ENCODE measurements at regions of chr19 and their contacts with region 1.

Region 1: DNA sequence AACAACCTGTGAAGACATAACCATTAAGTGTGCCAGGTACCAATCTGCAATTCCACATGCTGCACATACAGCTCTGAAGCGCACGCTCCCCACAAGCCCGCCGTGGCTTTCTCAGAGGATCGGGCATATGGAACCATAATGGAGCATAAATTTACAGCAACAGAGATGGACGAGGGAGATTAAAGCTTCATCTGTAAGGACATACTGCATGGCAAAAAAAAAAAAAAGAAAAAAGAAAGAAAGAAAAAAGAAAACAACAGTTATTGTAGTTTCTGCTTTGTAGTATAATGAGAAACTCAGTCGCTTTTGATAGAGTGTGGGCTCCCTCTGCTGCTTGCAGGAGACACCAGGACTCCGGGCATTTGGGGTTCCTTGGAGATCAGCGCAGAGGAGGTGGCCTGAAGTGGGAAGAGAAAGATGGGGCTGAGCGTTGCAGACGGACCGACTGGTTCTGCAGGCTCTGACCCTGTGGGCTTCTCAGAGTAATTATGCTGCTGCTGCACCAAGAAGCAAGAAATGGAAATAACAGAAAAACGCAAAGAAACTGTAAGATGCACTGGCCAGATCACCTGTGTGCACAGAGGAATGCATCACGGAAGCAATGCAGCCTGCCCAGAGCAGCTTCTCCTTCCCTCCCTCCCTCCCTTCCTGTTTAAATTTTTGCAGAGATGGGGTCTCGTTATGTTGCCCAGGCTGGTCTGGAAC is 10.8 kb upstream of the PDCD5 start:
- DNase-seq: peak in 1 of 2 donors; percentile 32
- ATAC-seq: no peak
- H3K4me3 ChIP-seq: no peak overlapping the region
- H3K27ac ChIP-seq: no peak overlapping the region
- H3K4me1 ChIP-seq: no peaks in the 10 kb centered on the region
- H3K27me3 ChIP-seq: peaks cover 0 to 1% of the 10 kb centered on the region in 2 donors

Region 2: GRCh38 chr19:31350701-31351068 is 1219.5 kb before region 1 on chr19:
- intact Hi-C with region 1: loop called in 1 of 2 experiments (anchors 10 kb)
- DNase-seq: peak; percentile 74 to 89
- ATAC-seq: peak; percentile 53
- H3K4me3 ChIP-seq: peak overlapping the region; percentile 98 to 99
- H3K27ac ChIP-seq: no peak overlapping the region
- H3K4me1 ChIP-seq: no peaks in the 10 kb centered on the region
- H3K27me3 ChIP-seq: no peaks in the 10 kb centered on the region

Region 3: DNA sequence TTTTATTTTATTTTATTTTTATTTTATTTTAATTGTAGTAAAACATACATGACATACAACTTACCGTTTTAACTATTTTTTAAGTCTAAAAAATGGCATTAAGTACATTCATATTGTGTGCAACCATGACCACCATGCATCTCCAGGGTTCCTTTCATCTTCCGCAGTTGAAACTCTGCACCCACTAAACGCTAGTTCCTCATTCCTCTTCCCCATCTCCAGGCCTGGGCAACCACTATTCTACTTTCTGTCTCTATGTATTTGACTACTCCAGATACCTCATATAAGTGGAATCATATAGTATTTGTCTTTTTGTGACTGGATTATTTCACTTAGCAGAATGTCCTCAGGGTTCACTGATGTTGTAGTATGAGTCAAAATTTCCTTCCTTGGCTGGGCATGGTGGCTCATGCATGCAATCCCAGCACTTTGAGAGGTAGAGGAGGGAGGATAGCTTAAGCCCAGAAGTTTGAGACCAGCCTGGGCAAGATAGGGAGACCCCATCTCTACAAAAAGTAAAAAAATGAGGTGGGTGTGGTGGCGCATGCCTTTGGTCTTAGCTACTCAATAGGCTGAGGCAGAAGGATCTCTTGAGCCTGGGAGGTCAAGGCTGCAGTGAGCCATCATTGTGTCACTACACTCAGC is 280.5 kb before region 1 on chr19:
- intact Hi-C with region 1: loop called in 1 of 2 experiments (anchors 10 kb)
- DNase-seq: no peak
- ATAC-seq: no peak
- H3K4me3 ChIP-seq: no peak overlapping the region
- H3K27ac ChIP-seq: no peak overlapping the region
- H3K4me1 ChIP-seq: no peaks in the 10 kb centered on the region
- H3K27me3 ChIP-seq: no peaks in the 10 kb centered on the region

Region 4: GRCh38 chr19:32674959-32675719 is 104.9 kb after region 1 on chr19 and contains the start of gene ANKRD27:
- intact Hi-C with region 1: no loop called
- DNase-seq: peak; percentile 99
- ATAC-seq: peak; percentile 99
- H3K4me3 ChIP-seq: peak within 1 kb of the TSS; percentile 66 to 68
- H3K27ac ChIP-seq: peak within 1 kb of the TSS in 1 of 2 donors; percentile 49
- H3K4me1 ChIP-seq: no peaks in the 10 kb centered on the region
- H3K27me3 ChIP-seq: no peaks in the 10 kb centered on the region
- total RNA-seq, gene ANKRD27: 28.8 to 30.9 TPM

Region 5: GRCh38 chr19:32809254-32809653 is 239.0 kb after region 1 on chr19:
- intact Hi-C with region 1: no loop called
- DNase-seq: peak in 1 of 2 donors; percentile 53
- ATAC-seq: no peak
- H3K4me3 ChIP-seq: no peak overlapping the region
- H3K27ac ChIP-seq: no peak overlapping the region
- H3K4me1 ChIP-seq: no peaks in the 10 kb centered on the region
- H3K27me3 ChIP-seq: no peaks in the 10 kb centered on the region